AG04450 (cell line): ENCODE measurements at regions of chr12 and their contacts with region 1.

Region 1: DNA sequence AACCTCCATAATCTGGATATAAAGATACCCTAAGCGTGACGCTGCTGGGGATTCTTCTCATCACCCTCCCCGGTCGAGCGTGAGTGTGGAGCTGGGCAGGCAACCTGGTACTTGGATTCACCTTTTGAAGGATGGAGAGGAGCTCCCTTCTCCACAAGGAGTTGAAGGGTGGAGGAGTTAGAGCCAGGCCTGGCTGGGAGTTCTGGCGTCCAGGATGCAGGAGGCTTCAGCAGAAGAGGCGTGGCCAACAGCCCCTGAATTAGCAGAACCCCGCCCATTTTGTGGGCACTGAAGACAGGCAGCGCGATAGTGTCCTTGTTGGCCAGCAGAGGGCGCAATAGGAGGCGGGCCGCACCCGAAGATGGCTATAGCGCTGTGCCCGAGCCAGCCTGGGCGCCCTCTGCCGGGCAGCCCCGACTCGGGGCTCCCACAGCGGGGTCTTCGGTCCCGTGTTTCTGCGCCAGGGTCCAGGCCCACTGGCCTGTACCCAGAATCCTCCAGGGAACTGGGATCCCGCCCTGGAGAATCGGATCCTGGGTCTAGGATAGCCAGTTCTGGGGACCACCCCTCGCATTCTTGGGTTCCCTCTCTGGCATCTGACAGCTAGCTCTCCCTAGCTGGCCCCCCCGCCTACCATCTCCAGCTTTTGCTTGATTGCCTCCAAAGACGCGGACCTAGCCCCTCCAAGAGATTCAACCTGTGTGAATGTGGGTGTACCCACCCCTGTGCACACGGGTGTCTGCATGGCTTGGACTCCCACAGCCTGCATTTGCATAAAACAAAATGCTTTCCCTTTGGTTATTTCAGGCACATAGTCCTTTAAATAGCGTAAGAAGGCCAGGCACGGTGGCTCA is 26.0 kb upstream of the SMUG1 start:
- DNase-seq: peak; percentile 60
- H3K4me3 ChIP-seq: peak overlapping the region; percentile 39
- H3K27ac ChIP-seq: no peak overlapping the region
- H3K27me3 ChIP-seq: peaks cover 22% of the 10 kb centered on the region
- CTCF ChIP-seq: peak; percentile 94

Region 2: DNA sequence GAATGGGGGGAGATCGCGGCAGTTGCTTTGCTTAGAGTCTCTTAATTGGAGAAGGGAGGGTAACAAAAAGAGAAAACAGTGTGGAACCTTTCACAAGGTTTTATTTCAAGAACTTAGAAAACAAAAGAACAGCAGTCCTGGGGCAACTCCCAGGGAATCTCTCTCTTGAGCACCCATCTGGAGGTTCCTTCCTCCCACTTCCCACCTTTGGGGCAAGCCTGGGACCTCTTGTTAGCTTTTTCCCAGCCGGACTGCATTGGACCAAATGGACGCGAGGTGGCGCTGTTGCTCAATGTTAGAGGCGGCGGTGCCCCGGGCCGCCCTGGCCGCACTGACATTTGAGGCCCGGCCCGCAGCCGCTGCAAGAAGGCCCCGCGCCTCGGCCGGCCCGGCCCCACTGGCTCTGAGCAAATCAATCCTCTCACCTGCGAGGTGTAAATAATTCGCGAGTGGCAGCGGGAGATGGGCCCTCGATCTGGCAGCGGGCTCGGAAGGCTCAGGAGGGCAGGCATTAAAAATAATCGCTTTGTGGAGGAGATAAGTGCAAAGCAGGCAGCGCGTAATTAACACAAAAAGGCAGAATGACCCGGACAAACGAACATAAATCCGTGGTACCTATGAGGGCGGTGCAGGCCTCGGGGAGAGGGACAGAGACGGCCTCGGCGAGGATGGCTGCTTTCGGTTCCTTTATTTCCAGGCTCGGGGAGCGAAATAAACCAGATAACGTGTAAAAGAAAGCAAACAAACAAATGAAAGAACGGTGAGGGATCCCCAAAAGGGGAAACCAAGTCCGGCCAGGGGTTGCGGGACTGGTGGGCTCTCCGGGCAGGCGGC is 208.7 kb before region 1 on chr12:
- CTCF ChIA-PET with region 1: interaction called, 107 read pairs
- POLR2A ChIA-PET with region 1: no interaction called
- DNase-seq: peak; percentile 20
- H3K4me3 ChIP-seq: peak overlapping the region; percentile 25
- H3K27ac ChIP-seq: no peak overlapping the region
- H3K27me3 ChIP-seq: peaks cover 95% of the 10 kb centered on the region
- CTCF ChIP-seq: peak; percentile 86

Region 3: DNA sequence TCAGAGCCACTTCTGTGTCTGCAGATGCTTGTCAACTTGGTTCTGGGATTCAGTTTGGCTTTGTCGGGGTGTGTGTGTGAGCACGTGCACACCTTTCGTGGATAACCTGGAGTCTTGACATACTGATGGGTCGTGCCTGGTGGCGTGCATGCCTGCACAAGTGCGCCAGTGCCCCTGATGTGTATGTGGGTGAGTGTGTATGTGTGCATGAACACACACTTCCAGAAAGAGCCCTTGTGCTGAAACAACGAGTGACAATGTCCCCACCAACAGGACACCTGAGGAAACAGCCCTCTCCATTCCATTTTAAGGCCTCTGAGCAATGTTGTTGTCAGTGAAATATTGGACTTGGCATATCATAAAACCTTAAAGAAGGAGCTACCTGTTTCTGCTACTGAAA is 79.9 kb before region 1 on chr12:
- CTCF ChIA-PET with region 1: no interaction called
- POLR2A ChIA-PET with region 1: no interaction called
- DNase-seq: no peak
- H3K4me3 ChIP-seq: no peak overlapping the region
- H3K27ac ChIP-seq: no peak overlapping the region
- H3K27me3 ChIP-seq: peaks cover 64% of the 10 kb centered on the region
- CTCF ChIP-seq: no peak

Region 4: GRCh38 chr12:54201001-54201794 is 13.6 kb before region 1 on chr12:
- CTCF ChIA-PET with region 1: interaction called, 74 read pairs
- POLR2A ChIA-PET with region 1: no interaction called
- DNase-seq: peak; percentile 48
- H3K4me3 ChIP-seq: no peak overlapping the region
- H3K27ac ChIP-seq: no peak overlapping the region
- H3K27me3 ChIP-seq: peaks cover 33% of the 10 kb centered on the region
- CTCF ChIP-seq: peak; percentile 100

Region 5: GRCh38 chr12:54251667-54252284 is 37.0 kb after region 1 on chr12:
- CTCF ChIA-PET with region 1: interaction called, 10 read pairs
- POLR2A ChIA-PET with region 1: no interaction called
- DNase-seq: no peak
- H3K4me3 ChIP-seq: no peak overlapping the region
- H3K27ac ChIP-seq: no peak overlapping the region
- H3K27me3 ChIP-seq: no peaks in the 10 kb centered on the region
- CTCF ChIP-seq: peak; percentile 76

Region 6: DNA sequence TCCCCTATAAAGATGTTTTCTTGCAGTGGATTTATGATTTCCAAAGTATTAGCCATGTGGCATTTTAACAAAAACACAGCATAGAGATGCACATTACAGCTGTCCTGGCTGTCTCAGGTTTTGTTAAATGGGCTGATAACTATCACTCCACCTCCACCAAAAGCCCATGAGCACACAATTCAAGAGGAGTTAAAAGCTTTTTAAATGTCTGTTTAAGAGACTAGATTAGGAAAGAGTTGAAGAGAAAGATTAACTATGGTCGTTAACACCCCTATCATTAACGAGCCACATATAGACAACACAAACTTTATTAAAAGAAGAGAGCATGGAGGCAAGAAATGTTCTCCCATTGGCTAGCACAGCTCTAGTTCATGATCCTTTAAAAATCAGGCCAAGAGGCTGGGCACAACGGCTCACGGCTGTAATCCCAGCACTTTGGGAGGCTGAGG is 50.6 kb after region 1 on chr12:
- CTCF ChIA-PET with region 1: interaction called, 22 read pairs
- POLR2A ChIA-PET with region 1: no interaction called
- DNase-seq: no peak
- H3K4me3 ChIP-seq: no peak overlapping the region
- H3K27ac ChIP-seq: no peak overlapping the region
- H3K27me3 ChIP-seq: no peaks in the 10 kb centered on the region
- CTCF ChIP-seq: no peak

Region 7: DNA sequence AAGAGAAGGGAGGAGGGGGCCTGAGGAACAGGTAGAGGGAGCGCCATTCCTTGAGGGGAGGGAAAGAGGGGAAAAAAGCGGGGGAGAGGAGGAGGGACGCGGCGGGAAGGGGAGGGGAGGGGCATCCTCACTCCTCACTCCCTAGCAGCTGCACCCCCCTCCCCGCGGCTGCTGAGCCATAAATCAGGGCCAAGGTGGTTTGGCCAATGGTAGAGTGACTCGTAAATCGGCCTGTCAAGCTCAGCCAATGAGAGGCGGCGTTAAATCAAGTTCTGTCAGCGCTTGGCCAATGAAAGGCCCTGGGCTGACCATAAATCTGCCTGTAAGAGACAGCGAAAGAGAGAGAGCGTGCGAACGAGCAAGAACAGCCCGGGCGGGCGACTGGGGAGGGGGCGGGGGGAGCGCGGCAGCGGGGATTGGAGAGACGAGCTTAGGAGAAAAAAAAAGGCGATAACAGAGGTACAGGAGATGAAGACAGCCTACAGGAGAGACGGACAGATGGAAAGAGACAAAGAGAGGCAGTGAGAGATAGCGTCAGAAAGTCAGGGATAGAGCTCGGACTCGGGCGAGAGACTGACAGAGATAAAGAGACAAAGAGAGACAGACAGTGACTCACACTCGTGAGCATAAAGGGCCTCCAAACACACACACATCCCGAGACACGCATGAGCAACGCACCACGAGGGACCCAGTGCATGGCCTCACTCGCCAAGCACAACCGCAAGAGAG is 144.4 kb after region 1 on chr12:
- CTCF ChIA-PET with region 1: interaction called, 45 read pairs
- POLR2A ChIA-PET with region 1: no interaction called
- DNase-seq: peak; percentile 99
- H3K4me3 ChIP-seq: peak overlapping the region; percentile 65
- H3K27ac ChIP-seq: peak overlapping the region; percentile 97
- H3K27me3 ChIP-seq: no peaks in the 10 kb centered on the region
- CTCF ChIP-seq: no peak

Region 8: DNA sequence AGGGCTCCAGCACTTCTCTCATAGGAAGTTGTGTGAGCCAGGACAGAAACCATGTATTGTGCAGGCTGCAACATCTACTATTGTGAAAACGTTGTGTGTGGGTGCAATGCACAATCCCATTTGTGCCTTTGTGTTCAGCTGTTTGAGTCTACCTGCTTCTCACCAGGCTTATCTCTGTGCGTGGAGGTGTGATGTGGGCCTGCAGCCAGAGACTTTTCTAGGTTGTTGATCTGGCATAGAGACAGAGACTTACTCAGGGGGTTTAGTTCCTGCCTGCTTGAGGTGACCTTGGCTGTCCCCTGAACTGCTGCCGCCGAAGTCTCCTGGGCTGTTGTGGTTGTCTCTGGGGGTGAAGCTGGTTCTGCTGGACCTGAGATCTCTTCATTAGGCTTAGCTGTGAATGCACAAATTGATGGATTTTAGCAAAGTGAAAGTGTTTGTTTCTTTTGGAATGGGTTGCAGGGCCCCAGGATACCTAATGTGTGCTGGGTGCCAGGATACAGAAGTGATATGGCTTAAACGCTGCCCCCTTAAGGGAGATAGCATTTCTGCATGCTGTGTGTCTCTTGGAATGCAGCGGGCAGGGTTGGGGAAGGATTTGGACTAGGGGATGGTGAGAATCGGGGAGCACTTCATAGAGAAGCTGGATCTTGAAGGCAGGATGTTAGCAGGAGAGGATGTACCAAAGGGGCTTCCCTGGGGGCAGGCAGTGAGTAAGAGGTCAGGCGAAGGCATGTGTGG is 417.4 kb after region 1 on chr12:
- CTCF ChIA-PET with region 1: no interaction called
- POLR2A ChIA-PET with region 1: no interaction called
- DNase-seq: no peak
- H3K4me3 ChIP-seq: no peak overlapping the region
- H3K27ac ChIP-seq: no peak overlapping the region
- H3K27me3 ChIP-seq: no peaks in the 10 kb centered on the region
- CTCF ChIP-seq: no peak

Region 9: DNA sequence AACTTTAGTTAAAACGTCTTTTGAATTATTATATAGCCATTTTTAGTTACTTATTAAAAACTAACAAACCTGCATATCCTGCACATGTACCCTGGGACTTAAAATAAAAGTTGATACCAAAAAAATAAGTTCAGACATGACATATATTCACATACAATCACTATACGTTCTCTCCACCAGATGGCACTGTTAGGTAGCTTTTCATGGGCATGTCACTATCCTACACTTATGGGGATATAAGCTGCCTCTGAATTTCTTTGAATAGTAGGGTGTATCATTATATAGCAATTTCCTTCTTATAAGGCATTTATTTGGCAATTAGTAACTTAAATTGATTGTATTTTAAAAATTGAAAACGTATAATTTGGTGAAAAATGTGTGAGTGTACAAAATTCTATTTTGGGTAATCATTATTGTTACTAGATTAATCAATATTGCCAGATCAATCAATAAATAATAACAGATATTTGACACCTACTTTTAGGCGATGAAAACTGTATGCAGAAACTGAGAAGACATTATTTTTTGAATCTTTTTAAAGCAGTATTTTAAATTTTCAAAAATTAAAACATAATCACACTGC is 974.3 kb after region 1 on chr12:
- CTCF ChIA-PET with region 1: no interaction called
- POLR2A ChIA-PET with region 1: no interaction called
- DNase-seq: peak; percentile 48
- H3K4me3 ChIP-seq: no peak overlapping the region
- H3K27ac ChIP-seq: no peak overlapping the region
- H3K27me3 ChIP-seq: no peaks in the 10 kb centered on the region
- CTCF ChIP-seq: peak; percentile 76